ENCODE measurements at regions of chr17 and their contacts with region 1.

Region 1: DNA sequence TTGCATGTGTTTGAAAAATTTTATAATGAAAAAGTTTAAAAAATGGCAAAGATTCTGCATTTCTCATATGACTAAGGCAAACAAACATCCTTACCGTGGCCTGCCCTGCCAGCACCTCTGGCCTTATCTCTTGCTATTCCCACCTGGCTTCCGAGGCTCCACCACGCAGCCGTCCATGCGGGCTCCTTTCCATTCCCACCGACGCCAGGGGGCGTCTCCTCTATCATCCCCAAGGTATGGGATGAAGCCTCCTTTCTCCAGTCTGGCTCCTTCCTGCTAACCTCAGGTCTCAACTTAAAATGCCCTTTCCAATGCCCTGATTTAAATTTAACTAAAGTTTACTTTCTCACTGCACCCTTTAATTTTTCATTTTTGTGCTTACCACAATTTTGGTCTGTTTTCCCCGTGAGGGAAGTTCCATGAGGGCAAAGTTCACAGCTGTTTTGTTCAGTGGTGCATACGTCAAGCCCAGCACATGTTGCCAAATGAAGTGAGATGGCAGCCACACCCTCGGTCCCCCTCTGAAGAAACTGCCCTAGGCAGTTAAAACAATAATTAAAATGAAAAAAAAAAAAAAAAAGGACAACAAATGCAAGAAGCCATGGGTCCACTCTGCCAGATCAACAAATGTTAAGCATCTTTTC is 13.3 kb upstream of the SDK2 start:
- DNase-seq: peak in 4 of 5 donors; percentile 39 to 77 (median 60)
- ATAC-seq: peak; percentile 55 to 76 (median 68)
- H3K4me3 ChIP-seq: no peak overlapping the region
- H3K27ac ChIP-seq: no peak overlapping the region
- H3K4me1 ChIP-seq: peaks cover 0 to 7% (median 0%) of the 10 kb centered on the region in 12 donors
- H3K27me3 ChIP-seq: peaks cover 0 to 18% (median 0%) of the 10 kb centered on the region in 9 donors
- CTCF ChIP-seq: peak; percentile 43 to 72 (median 54)
- POLR2A ChIP-seq: no peak

Region 2: GRCh38 chr17:73841431-73842060 is 184.0 kb after region 1 on chr17:
- intact Hi-C with region 1: loop called in 9 of 10 experiments (anchors 2 to 10 kb)
- DNase-seq: no peak
- ATAC-seq: peak in 3 of 4 donors; percentile 56 to 66 (median 66)
- H3K4me3 ChIP-seq: no peak overlapping the region
- H3K27ac ChIP-seq: no peak overlapping the region
- H3K4me1 ChIP-seq: no peaks in the 10 kb centered on the region
- H3K27me3 ChIP-seq: peaks cover 0 to 12% (median 0%) of the 10 kb centered on the region in 9 donors
- CTCF ChIP-seq: peak; percentile 31 to 68 (median 54)
- POLR2A ChIP-seq: no peak

Region 3: DNA sequence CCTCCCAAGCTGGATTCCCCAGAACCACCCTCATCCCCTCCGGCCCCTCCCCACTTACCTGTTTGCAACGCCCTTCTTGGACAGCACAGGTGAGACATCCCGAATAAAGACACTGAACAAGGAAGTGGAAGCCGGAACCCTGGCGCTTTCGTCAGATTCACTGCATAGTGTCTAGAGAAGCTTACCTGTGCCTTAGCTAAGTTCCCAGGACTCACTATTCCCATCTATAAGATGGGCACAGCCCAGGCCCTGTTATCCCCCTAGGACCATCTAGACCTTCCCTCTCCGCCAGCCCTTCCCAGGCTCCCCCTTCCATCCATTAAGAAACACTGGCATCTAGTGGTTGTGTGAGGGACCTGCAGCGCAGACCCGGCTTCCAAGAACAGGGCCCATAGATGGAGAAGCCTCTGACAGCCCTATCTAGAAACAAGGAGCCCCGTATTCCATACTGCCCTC is 519.0 kb after region 1 on chr17:
- intact Hi-C with region 1: loop called in 7 of 10 experiments (anchors 5 to 10 kb)
- DNase-seq: peak in 4 of 5 donors; percentile 28 to 51 (median 42)
- ATAC-seq: peak; percentile 72 to 94 (median 82)
- H3K4me3 ChIP-seq: no peak overlapping the region
- H3K27ac ChIP-seq: no peak overlapping the region
- H3K4me1 ChIP-seq: no peaks in the 10 kb centered on the region
- H3K27me3 ChIP-seq: peaks cover 0 to 68% (median 15%) of the 10 kb centered on the region in 9 donors
- CTCF ChIP-seq: peak; percentile 66 to 89 (median 76)
- POLR2A ChIP-seq: no peak